Activated CD4-positive, alpha-beta T cell treated with anti-CD3 and anti-CD28 coated beads, Interleukin-2, amount 10 ng/mL, durations not matched to agents 24 days and 14 days (primary cell): ENCODE measurements at regions of chrX and their contacts with region 1.

Region 1: DNA sequence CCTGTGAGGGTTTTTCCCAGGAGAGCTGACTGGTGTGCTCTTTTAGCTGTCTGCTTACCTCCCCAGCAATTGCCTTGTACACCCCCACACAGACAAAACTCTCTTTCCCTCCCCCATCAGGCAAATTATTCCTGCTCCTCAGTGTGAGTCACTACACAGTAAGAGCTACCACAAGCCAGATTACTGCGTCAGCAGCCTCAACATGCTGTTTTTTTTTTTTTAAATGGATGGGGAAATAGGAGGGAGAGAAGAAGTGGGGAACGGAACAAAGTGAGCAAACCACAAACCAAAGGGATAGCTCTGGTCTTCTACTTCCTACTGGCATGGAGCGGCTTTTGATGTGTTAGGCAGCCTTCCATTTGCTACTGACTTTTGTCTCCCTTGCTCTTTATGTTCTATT is 107.5 kb upstream of the ACSL4 start:
- DNase-seq: peak; percentile 52
- H3K4me3 Mint-ChIP-seq: no peak overlapping the region
- H3K27ac Mint-ChIP-seq: no peak overlapping the region
- H3K4me1 Mint-ChIP-seq: peaks cover 7% of the 10 kb centered on the region
- H3K27me3 Mint-ChIP-seq: no peaks in the 10 kb centered on the region

Region 2: GRCh38 chrX:109709129-109709631 is 131.4 kb before region 1 on chrX:
- intact Hi-C with region 1: loop called (anchors 1 kb)
- DNase-seq: no peak
- H3K4me3 Mint-ChIP-seq: peak overlapping the region; percentile 53
- H3K27ac Mint-ChIP-seq: peak overlapping the region; percentile 81
- H3K4me1 Mint-ChIP-seq: peaks cover 54% of the 10 kb centered on the region
- H3K27me3 Mint-ChIP-seq: no peaks in the 10 kb centered on the region

Region 3: GRCh38 chrX:109782994-109783700 is 57.4 kb before region 1 on chrX:
- intact Hi-C with region 1: loop called (anchors 1 kb)
- DNase-seq: peak; percentile 52
- H3K4me3 Mint-ChIP-seq: peak overlapping the region; percentile 75
- H3K27ac Mint-ChIP-seq: peak overlapping the region; percentile 95
- H3K4me1 Mint-ChIP-seq: peaks cover 17% of the 10 kb centered on the region
- H3K27me3 Mint-ChIP-seq: no peaks in the 10 kb centered on the region

Region 4: DNA sequence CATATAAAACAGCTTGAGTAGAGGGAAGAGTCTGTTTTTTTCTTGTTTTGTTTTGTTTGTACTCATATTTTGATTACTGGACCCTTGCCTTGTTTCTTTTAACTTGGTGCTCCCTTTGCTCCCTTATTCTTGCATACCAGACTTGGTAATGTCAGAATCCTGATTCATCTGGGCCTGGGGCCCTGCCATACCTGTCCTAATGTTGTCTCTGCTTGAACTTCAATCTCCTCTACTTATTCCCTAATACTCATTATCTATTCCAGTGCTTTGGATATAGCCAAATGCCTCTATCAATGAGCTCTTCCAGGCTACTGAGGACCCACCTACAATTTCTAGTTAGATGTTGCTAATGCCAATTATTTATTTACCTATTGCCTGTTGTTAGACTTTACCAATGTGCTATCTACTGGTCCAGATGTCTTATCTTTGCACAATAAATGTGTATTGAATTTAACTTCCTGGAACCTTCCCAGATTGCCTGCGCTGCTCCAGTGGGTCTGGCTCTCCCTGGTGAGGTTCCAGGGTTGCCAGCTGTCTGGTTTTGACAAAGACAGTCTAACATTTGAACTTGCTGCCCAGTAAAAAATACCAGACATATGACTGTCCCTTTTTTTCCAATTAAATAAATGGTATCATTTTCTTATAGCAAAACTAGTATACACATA is 43.1 kb before region 1 on chrX:
- intact Hi-C with region 1: loop called (anchors 5 kb)
- DNase-seq: no peak
- H3K4me3 Mint-ChIP-seq: no peak overlapping the region
- H3K27ac Mint-ChIP-seq: no peak overlapping the region
- H3K4me1 Mint-ChIP-seq: no peaks in the 10 kb centered on the region
- H3K27me3 Mint-ChIP-seq: no peaks in the 10 kb centered on the region

Region 5: GRCh38 chrX:109856974-109857373 is 16.4 kb after region 1 on chrX:
- intact Hi-C with region 1: loop called (anchors 2 kb)
- DNase-seq: peak; percentile 70
- H3K4me3 Mint-ChIP-seq: no peak overlapping the region
- H3K27ac Mint-ChIP-seq: no peak overlapping the region
- H3K4me1 Mint-ChIP-seq: peaks cover 6% of the 10 kb centered on the region
- H3K27me3 Mint-ChIP-seq: no peaks in the 10 kb centered on the region

Region 6: GRCh38 chrX:110070970-110071369 is 230.4 kb after region 1 on chrX:
- intact Hi-C with region 1: no loop called
- DNase-seq: no peak
- H3K4me3 Mint-ChIP-seq: no peak overlapping the region
- H3K27ac Mint-ChIP-seq: no peak overlapping the region
- H3K4me1 Mint-ChIP-seq: no peaks in the 10 kb centered on the region
- H3K27me3 Mint-ChIP-seq: no peaks in the 10 kb centered on the region

Region 7: GRCh38 chrX:110578270-110578669 is 737.7 kb after region 1 on chrX:
- intact Hi-C with region 1: no loop called
- DNase-seq: no peak
- H3K4me3 Mint-ChIP-seq: no peak overlapping the region
- H3K27ac Mint-ChIP-seq: no peak overlapping the region
- H3K4me1 Mint-ChIP-seq: no peaks in the 10 kb centered on the region
- H3K27me3 Mint-ChIP-seq: no peaks in the 10 kb centered on the region